AG04450 (cell line): ENCODE measurements at regions of chr10 and their contacts with region 1.

Region 1: DNA sequence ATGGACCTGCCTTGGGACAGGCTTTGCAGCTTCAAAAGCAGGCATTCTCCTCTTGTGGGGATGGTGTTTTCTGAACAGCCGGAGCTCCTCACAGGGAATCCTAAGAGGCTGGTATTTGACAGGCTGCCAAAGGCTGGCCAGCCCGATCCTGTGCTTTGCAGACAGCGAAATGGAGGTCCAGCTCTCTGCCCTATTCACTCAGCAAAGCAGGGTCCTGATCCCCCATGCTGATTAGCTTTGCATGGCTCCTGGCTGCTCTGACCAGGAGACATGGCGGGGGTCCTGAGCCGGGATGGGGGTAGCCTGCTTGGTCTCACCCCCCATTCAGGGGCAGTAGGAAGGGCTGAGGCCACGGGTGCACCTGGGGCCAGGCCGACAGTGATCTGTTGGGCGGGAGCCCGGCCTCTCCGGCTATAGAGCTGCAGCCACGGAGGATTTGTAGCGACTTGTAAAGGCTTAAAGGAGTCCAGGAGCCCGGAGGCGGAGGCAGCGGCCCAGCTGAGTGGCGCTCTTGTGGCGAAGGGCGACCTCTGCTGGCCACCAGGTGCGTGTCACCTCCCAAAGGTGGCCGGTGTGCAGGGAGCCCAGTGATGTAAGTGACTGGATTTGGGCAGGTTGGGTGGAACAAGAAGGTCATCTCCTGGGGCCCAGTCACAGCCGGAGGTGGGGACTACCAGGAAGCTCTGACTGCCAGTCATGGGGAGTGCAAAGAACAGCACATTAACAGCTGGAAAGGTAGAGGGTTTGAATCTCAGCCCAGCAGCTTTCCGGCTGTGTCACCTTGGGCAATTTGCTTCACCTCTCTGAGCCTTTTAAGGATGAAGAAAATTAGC is 126.5 kb downstream of the ZMIZ1 start:
- DNase-seq: peak; percentile 74
- H3K4me3 ChIP-seq: no peak overlapping the region
- H3K27ac ChIP-seq: peak overlapping the region; percentile 78
- H3K27me3 ChIP-seq: no peaks in the 10 kb centered on the region
- CTCF ChIP-seq: peak; percentile 94

Region 2: GRCh38 chr10:78805176-78805575 is 390.1 kb before region 1 on chr10:
- CTCF ChIA-PET with region 1: no interaction called
- POLR2A ChIA-PET with region 1: no interaction called
- DNase-seq: peak; percentile 97
- H3K4me3 ChIP-seq: no peak overlapping the region
- H3K27ac ChIP-seq: peak overlapping the region; percentile 33
- H3K27me3 ChIP-seq: peaks cover 7% of the 10 kb centered on the region
- CTCF ChIP-seq: no peak

Region 3: DNA sequence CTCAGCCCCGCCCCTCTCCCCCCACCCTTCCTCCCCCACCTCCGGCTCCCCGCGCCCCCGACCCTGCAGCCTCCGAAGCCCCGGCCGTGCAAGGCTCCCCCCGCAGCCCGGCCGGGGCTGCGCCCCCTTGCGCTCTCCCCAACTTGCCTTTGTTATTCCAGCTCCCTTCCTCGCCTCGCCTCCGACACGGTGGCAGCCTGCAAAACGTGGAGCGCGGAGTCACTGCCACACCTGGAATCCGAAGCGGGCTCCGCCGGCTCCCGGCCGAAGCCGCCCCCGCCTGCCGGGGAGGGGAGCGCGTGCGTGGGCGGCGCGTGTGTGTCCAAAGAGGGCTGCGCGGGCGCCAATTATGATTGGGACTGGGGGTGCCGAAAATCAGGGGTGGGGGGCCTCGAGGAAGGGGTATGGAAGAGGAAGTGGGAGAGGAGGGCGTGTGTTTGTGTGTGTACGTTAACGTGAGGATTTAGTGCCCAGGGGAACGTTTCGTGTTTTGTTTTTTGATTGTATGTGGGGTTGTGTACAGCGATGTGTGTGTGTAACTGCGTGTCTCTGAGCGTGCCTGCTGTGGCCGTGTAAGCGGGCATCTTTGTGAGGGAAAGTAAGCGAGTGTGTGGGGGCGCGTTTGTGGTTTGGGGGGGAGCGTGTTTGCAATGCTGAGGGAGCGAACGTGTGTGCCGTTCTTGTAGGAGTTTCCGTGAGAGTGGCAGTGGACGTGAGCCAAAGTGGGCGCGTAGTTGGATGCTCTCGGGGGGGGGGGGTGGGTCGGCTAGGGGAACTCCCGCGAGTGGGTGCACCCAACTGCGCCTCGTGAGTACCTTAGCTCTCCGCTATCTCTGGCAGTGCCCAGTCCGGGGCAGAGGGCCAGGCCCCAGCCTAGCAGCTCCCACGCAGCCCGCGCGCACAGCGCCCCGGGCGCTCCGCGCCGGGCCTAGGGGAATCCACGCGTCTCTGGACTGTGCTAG is 127.8 kb before region 1 on chr10:
- CTCF ChIA-PET with region 1: interaction called, 16 read pairs
- POLR2A ChIA-PET with region 1: interaction called, 9 read pairs
- DNase-seq: peak; percentile 84
- H3K4me3 ChIP-seq: peak overlapping the region; percentile 65
- H3K27ac ChIP-seq: peak overlapping the region; percentile 61
- H3K27me3 ChIP-seq: peaks cover 2% of the 10 kb centered on the region
- CTCF ChIP-seq: peak; percentile 44

Region 4: GRCh38 chr10:79079490-79080355 is 115.6 kb before region 1 on chr10:
- CTCF ChIA-PET with region 1: interaction called, 16 read pairs
- POLR2A ChIA-PET with region 1: no interaction called
- DNase-seq: no peak
- H3K4me3 ChIP-seq: no peak overlapping the region
- H3K27ac ChIP-seq: peak overlapping the region; percentile 61
- H3K27me3 ChIP-seq: no peaks in the 10 kb centered on the region
- CTCF ChIP-seq: no peak

Region 5: GRCh38 chr10:79139124-79139835 is 56.0 kb before region 1 on chr10:
- CTCF ChIA-PET with region 1: interaction called, 11 read pairs
- POLR2A ChIA-PET with region 1: no interaction called
- DNase-seq: peak; percentile 83
- H3K4me3 ChIP-seq: no peak overlapping the region
- H3K27ac ChIP-seq: peak overlapping the region; percentile 97
- H3K27me3 ChIP-seq: no peaks in the 10 kb centered on the region
- CTCF ChIP-seq: no peak